Posterior cingulate gyrus (tissue), 11 donors: ENCODE measurements at regions of chr7 and their contacts with region 1.

Region 1: GRCh38 chr7:91373111-91373800 is 109.0 kb downstream of the FZD1 start:
- DNase-seq: no peak

Region 2: GRCh38 chr7:91306266-91306665 is 67.0 kb before region 1 on chr7:
- intact Hi-C with region 1: loop called (anchors 5 kb)
- DNase-seq: no peak

Region 3: DNA sequence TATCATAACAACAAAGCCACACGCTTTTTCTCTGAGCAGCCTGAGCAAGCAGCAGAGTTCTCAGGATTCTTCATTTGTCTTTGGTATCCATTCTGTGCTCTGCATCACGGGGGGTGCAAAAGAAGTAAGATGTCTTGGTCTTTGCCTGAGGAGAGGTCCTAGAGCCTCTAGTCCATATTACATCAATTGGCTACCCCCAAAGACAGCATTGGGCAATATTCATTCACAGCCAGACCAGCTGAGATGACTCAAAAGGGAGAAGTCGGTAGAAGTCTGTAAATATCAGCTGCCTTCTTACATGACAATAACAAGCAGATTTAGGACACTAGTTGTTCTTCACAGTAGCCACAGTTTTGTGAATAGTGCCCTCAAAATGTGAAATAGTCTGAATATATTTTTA is 42.4 kb before region 1 on chr7:
- intact Hi-C with region 1: no loop called
- DNase-seq: no peak